ENCODE measurements at regions of chr11 and their contacts with region 1.

Region 1: GRCh38 chr11:449880-450808 is at the start of gene PTDSS2:
- DNase-seq: peak; percentile 99
- H3K4me3 ChIP-seq: peak within 1 kb of the TSS; percentile 96 to 100 (median 98)
- H3K27ac ChIP-seq: peak within 1 kb of the TSS; percentile 79 to 95 (median 92)
- H3K4me1 ChIP-seq: peaks cover 32 to 57% (median 45%) of the 10 kb centered on the region in 6 donors
- H3K27me3 ChIP-seq: no peaks in the 10 kb centered on the region
- CTCF ChIP-seq: peak in 3 of 11 experiments; percentile 13 to 29 (median 17)
- POLR2A ChIP-seq: peak in 2 of 3 donors; percentile 7 to 40
- total RNA-seq, gene PTDSS2: 24.6 to 40.7 (median 29.4) TPM

Region 2: DNA sequence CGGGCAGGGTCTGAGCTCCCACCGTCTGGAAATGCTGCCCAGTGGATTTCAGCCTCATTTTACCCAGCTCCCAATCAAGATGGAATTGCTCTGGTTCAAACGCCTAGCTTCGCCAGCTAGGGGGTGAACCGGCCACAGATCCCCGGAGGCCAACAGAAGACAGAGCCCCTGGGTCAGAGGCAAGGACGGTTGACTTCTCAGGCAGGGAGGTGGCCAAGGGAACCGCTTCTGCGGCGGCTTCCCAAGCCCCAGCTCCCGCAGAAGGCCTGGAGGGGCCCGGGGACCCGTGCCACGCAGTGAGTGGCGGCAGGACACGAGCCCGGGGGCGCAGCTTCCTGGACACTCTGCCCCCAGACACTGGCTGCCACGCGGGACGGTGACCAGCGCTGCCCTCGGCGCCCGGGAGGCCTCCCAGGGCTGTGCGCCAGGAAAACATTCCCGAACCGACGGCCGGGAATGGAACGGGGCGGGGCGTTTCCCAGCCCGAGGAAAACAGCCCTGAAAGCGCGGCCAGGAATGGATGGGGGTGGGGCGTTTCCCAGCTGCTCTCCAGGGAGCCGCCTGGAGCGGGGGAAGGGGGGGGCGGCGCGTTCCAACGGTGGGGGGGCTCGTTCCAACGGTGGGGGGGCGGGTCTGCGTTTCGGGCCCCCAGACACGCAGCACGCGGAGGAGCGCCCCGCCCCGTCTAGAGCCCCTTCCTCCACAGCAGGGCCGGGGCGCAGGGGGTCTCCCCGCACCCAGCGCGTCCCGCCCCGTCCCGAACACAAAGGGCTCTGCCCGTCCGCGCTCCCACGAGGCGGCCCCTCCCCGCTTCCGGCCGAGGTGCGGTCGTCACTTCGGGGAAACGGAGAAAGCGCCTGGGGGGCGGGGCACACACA is 94.3 kb before region 1 on chr11:
- intact Hi-C with region 1: no loop called
- DNase-seq: peak; percentile 98
- H3K4me3 ChIP-seq: peak overlapping the region; percentile 32 to 66 (median 40)
- H3K27ac ChIP-seq: peak overlapping the region; percentile 88 to 99 (median 97)
- H3K4me1 ChIP-seq: peaks cover 7 to 51% (median 36%) of the 10 kb centered on the region in 6 donors
- H3K27me3 ChIP-seq: no peaks in the 10 kb centered on the region
- CTCF ChIP-seq: peak in 2 of 11 experiments; percentile 4 to 19
- POLR2A ChIP-seq: peak in 2 of 3 donors; percentile 65 to 79

Region 3: DNA sequence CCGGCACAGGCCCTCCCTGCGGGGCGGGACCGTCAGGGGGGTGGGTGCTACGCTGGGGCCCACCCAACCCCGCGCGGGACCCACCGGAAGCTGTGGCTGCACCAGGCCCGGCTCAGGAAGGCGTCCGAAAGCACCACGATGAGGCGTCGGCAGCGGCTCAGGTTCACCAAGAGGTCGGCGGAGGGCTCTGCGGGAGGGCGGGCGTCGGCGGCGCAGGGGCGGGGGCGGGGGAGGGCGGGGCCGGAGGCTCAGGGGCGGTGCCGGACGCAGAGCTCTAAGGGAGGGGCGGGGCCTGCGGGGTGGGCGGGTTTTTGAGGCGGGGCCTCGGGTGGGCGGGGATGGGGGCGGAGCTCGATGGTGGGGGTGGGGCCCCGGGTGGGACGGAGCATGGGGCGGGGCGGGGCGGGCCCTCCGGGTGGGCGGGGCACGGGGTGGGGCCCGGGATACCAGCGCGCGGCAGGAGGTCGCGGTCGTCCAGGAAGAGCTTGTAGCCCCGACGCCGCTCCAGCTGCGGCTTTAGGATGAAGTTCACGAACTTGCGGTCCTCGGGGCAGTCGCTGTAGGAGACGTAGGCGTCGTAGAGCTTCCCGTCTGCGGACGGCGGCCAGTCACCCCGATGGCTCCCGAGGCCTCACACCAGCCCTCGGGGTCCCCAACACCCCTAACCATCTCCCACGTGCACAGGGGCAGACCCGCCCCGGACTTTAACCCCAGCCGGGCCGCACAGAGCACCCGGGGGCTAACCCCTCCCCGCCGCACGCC is 43.0 kb before region 1 on chr11:
- intact Hi-C with region 1: loop called (anchors 5 kb)
- DNase-seq: peak; percentile 94
- H3K4me3 ChIP-seq: peak overlapping the region; percentile 45 to 82 (median 52)
- H3K27ac ChIP-seq: peak overlapping the region; percentile 53 to 92 (median 84)
- H3K4me1 ChIP-seq: peaks cover 10 to 51% (median 34%) of the 10 kb centered on the region in 6 donors
- H3K27me3 ChIP-seq: peaks cover 0 to 11% (median 6%) of the 10 kb centered on the region in 7 donors
- CTCF ChIP-seq: no peak
- POLR2A ChIP-seq: no peak

Region 4: GRCh38 chr11:777288-778255 is 327.4 kb after region 1 on chr11 and contains the start of gene GATD1:
- intact Hi-C with region 1: no loop called
- DNase-seq: peak; percentile 99
- H3K4me3 ChIP-seq: peak within 1 kb of the TSS; percentile 46 to 97 (median 76)
- H3K27ac ChIP-seq: peak within 1 kb of the TSS; percentile 43 to 91 (median 84)
- H3K4me1 ChIP-seq: peaks cover 14 to 74% (median 44%) of the 10 kb centered on the region in 6 donors
- H3K27me3 ChIP-seq: no peaks in the 10 kb centered on the region
- CTCF ChIP-seq: no peak
- POLR2A ChIP-seq: peak in 2 of 3 donors; percentile 33 to 67
- total RNA-seq, gene GATD1: 26.0 to 56.4 (median 50.9) TPM